B cell (primary cell): ENCODE measurements at regions of chr2 and their contacts with region 1.

Region 1: DNA sequence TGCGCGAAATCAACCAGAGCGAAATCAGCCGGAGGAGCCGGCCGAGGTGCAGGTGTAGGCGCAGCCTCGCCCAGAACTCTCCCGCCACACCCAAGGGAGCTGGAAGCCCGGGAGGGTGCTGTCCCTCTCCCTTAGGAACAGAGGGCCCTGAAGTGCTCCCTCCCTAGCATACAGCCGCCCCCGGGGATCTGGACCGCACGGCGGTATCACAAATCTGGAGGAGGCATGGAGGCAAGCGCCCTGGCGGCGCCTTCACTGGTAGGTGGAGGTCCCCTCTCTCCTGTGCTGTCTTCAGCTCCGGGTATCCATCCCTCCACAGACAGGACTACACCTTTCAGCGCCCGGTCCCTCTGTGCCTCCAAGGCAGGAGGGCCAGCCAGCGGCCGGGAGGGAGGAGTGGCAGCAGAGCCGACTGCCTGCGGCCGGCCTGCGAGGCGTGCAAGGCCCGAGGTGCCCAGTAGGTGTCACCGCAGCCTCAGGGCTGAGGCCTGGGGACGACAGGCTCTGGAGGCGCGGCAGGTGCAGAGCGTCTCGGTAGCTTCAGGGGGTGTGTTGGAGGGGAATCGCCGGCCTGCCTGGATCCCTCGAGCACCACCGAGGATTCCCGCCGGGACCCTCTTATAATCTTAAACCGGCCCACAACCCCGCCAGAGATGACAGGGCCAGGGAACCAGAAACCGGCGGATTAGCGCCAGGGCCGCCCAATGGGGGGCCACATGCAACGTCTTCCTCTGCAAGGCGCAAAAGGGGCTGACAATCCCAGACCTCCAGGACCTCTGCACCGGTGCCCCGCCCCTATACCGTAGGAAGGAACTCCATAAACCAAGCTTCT is 2.8 kb downstream of the IHH start:
- DNase-seq: peak; percentile 85
- ATAC-seq: peak; percentile 98
- H3K4me3 ChIP-seq: peak overlapping the region in 2 of 5 experiments; percentile 12 to 35
- H3K4me3 Mint-ChIP-seq: peak overlapping the region; percentile 74
- H3K27ac ChIP-seq: no peak overlapping the region
- H3K27ac Mint-ChIP-seq: peak overlapping the region; percentile 46
- H3K4me1 ChIP-seq: peaks cover 35 to 41% of the 10 kb centered on the region in 2 donors
- H3K4me1 Mint-ChIP-seq: peaks cover 24% of the 10 kb centered on the region
- H3K27me3 ChIP-seq: peaks cover 0 to 59% (median 45%) of the 10 kb centered on the region in 4 experiments
- H3K27me3 Mint-ChIP-seq: peaks cover 50% of the 10 kb centered on the region
- CTCF ChIP-seq: peak; percentile 91

Region 2: GRCh38 chr2:218995972-218996711 is 61.8 kb before region 1 on chr2:
- CTCF ChIA-PET with region 1: no interaction called
- POLR2A ChIA-PET with region 1: no interaction called
- intact Hi-C with region 1: loop called (anchors 10 kb)
- DNase-seq: peak; percentile 81
- ATAC-seq: peak; percentile 80
- H3K4me3 ChIP-seq: peak overlapping the region in 1 of 5 experiments; percentile 24
- H3K4me3 Mint-ChIP-seq: peak overlapping the region; percentile 26
- H3K27ac ChIP-seq: no peak overlapping the region
- H3K27ac Mint-ChIP-seq: no peak overlapping the region
- H3K4me1 ChIP-seq: peaks cover 29 to 46% of the 10 kb centered on the region in 2 donors
- H3K4me1 Mint-ChIP-seq: peaks cover 21% of the 10 kb centered on the region
- H3K27me3 ChIP-seq: peaks cover 0 to 91% (median 57%) of the 10 kb centered on the region in 4 experiments
- H3K27me3 Mint-ChIP-seq: peaks cover 60% of the 10 kb centered on the region
- CTCF ChIP-seq: peak; percentile 79